ENCODE measurements at regions of chr16 and their contacts with region 1.

Region 1: GRCh38 chr16:88553739-88554138 is 16.5 kb upstream of the ZC3H18 start:
- DNase-seq: no peak
- ATAC-seq: no peak
- H3K4me3 Mint-ChIP-seq: no peak overlapping the region
- H3K27ac Mint-ChIP-seq: no peak overlapping the region
- H3K4me1 Mint-ChIP-seq: peaks cover 3% of the 10 kb centered on the region; the same call in 1 of the 2 replicates
- H3K27me3 Mint-ChIP-seq: peaks cover 25% of the 10 kb centered on the region
- CTCF ChIP-seq: no peak

Region 2: DNA sequence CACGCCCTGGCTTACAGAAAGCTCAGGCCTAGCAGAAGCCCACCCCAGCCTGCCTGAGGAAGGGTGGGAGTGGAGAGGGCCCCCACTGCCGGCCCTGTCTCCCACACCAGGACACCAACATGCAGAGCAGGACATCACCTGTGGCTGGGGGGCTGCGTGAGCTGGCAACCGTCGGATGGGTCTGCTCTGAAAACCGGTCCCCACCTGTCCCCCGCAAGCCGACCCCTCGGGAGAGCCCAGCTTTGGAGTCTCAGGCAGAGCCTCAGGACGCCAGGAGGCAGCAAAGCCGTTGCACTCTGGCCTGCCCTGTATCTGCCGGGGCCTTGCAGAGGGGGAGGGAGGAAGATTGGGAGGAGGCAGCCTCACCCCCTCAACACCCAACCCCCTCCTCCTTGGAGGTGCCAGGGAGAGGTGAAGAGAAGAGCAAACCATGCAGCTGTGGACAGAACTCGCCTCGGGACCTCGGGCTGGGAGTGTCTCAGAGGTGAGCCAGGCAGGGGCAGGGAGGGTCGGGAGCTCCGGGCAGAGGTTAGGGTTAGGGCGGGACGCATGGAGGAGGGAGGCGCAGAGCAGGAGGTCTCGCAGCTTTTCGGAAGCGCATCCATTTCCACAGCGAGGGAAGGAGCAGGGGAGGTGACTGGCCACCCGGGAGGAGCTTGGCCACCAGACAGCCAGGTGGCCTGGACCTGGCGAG is 13.9 kb before region 1 on chr16:
- CTCF ChIA-PET with region 1: interaction called, 69 read pairs
- POLR2A ChIA-PET with region 1: no interaction called
- DNase-seq: no peak
- ATAC-seq: peak; percentile 36; the same call in 1 of the 2 replicates
- H3K4me3 Mint-ChIP-seq: no peak overlapping the region
- H3K27ac Mint-ChIP-seq: no peak overlapping the region
- H3K4me1 Mint-ChIP-seq: peaks cover 12% of the 10 kb centered on the region; the same call in 1 of the 2 replicates
- H3K27me3 Mint-ChIP-seq: peaks cover 37% of the 10 kb centered on the region
- CTCF ChIP-seq: no peak

Region 3: DNA sequence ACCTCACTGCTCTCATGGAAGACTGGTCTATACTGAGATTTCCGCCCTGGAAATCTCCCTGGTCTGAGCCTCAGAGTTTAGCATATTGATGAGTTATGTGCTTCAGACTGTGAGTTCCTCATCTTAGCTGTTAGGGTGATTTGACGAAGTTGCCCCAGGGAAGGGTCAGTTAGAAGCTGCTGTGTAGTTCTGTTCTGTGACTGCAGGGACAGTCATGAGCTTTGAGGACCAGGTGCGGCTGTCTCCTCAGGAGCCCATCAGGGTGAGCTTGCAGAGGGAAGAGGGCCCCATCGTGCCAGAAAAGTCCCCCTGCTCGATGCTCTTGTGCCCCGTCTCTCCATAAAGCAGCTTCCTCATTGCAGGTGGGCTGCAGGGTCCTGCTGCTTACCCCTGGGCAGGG is 56.3 kb after region 1 on chr16:
- CTCF ChIA-PET with region 1: no interaction called
- POLR2A ChIA-PET with region 1: no interaction called
- DNase-seq: peak; percentile 34
- ATAC-seq: peak; percentile 66
- H3K4me3 Mint-ChIP-seq: no peak overlapping the region
- H3K27ac Mint-ChIP-seq: no peak overlapping the region
- H3K4me1 Mint-ChIP-seq: peaks cover 13% of the 10 kb centered on the region
- H3K27me3 Mint-ChIP-seq: no peaks in the 10 kb centered on the region
- CTCF ChIP-seq: no peak

Measured in WTC11 (cell line).